ENCODE measurements at regions of chr7 and their contacts with region 1.

Region 1: GRCh38 chr7:30564243-30564892 is 30.3 kb upstream of the GARS1 start:
- DNase-seq: peak; percentile 83
- ATAC-seq: peak; percentile 97
- H3K4me3 Mint-ChIP-seq: no peak overlapping the region
- H3K27ac Mint-ChIP-seq: peak overlapping the region; percentile 71
- H3K4me1 Mint-ChIP-seq: no peaks in the 10 kb centered on the region
- H3K27me3 Mint-ChIP-seq: no peaks in the 10 kb centered on the region

Region 2: DNA sequence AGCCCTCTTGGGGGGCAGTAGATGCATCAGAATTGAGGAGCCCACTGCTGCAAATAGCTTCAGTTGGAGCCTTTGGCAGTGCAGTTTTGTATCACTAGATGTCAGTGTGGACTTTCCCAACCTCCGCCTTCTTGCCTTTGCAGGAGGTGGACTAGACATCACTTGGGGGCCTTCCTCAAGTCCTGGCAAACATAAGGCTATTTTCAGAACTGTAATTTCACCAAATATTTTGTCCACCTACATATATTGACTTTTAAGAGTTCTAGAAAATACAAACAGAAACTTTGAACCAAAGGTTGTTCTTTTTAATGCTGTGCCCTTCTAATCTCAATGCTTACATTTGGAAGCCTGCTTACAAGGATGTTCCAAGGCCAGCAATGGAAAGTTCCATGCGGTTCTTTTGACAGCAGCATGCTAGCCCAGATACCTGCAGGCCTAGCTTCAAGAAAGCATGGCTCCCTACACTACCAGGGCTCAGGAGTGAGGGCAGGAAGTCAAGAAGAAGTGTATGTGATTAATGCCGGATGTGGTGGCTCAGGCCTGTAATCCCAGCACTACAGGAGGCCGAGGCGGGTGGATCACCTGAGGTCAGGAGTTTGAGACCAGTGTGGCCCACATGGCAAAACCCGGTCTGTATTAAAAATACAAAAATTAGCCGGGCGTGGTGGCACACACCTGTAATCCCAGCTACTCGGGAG is 288.0 kb before region 1 on chr7:
- CTCF ChIA-PET with region 1: interaction called, 74 read pairs
- POLR2A ChIA-PET with region 1: no interaction called
- DNase-seq: peak; percentile 65
- ATAC-seq: peak; percentile 73
- H3K4me3 Mint-ChIP-seq: no peak overlapping the region
- H3K27ac Mint-ChIP-seq: no peak overlapping the region
- H3K4me1 Mint-ChIP-seq: peaks cover 6% of the 10 kb centered on the region
- H3K27me3 Mint-ChIP-seq: no peaks in the 10 kb centered on the region

Region 3: GRCh38 chr7:30510124-30511075 is 54.0 kb before region 1 on chr7:
- CTCF ChIA-PET with region 1: interaction called, 26 read pairs
- POLR2A ChIA-PET with region 1: no interaction called
- DNase-seq: peak; percentile 49
- ATAC-seq: peak; percentile 55
- H3K4me3 Mint-ChIP-seq: no peak overlapping the region
- H3K27ac Mint-ChIP-seq: no peak overlapping the region
- H3K4me1 Mint-ChIP-seq: peaks cover 6% of the 10 kb centered on the region
- H3K27me3 Mint-ChIP-seq: no peaks in the 10 kb centered on the region

Region 4: DNA sequence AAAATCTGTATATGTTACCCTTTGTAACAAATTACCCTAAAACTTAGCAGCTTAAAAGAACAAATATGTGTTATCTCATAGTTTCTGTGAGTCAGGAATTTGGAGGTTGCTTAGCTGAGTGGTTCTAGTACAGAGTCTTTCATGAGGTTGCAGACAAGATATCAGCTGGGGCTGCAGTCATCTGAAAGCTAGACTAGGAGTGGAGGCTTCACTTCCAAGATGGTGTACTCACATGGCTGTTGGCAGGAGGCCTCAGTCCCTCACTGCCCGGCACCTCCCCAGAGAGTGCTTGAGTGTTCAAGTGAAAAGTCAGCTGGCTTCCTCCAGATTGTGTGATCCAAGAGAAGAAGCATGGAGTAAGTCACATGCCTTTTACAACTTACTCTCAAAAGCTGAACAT is 42.8 kb before region 1 on chr7:
- CTCF ChIA-PET with region 1: interaction called, 10 read pairs
- POLR2A ChIA-PET with region 1: no interaction called
- DNase-seq: no peak
- ATAC-seq: no peak
- H3K4me3 Mint-ChIP-seq: no peak overlapping the region
- H3K27ac Mint-ChIP-seq: no peak overlapping the region
- H3K4me1 Mint-ChIP-seq: peaks cover 5% of the 10 kb centered on the region
- H3K27me3 Mint-ChIP-seq: no peaks in the 10 kb centered on the region

Region 5: GRCh38 chr7:30548762-30549344 is 15.5 kb before region 1 on chr7:
- CTCF ChIA-PET with region 1: interaction called, 39 read pairs
- POLR2A ChIA-PET with region 1: no interaction called
- DNase-seq: peak; percentile 47
- ATAC-seq: peak; percentile 42
- H3K4me3 Mint-ChIP-seq: no peak overlapping the region
- H3K27ac Mint-ChIP-seq: no peak overlapping the region
- H3K4me1 Mint-ChIP-seq: no peaks in the 10 kb centered on the region
- H3K27me3 Mint-ChIP-seq: no peaks in the 10 kb centered on the region

Region 6: GRCh38 chr7:30594549-30595435 is 30.4 kb after region 1 on chr7 and contains the start of gene GARS1:
- CTCF ChIA-PET with region 1: interaction called, 10 read pairs
- POLR2A ChIA-PET with region 1: no interaction called
- DNase-seq: peak; percentile 92
- ATAC-seq: peak; percentile 89
- H3K4me3 Mint-ChIP-seq: peak within 1 kb of the TSS; percentile 90
- H3K27ac Mint-ChIP-seq: peak within 1 kb of the TSS; percentile 99
- H3K4me1 Mint-ChIP-seq: peaks cover 51% of the 10 kb centered on the region
- H3K27me3 Mint-ChIP-seq: no peaks in the 10 kb centered on the region
- total RNA-seq, gene GARS1: 185 to 189 TPM

Measured in activated CD8-positive, alpha-beta T cell treated with anti-CD3 and anti-CD28 coated beads, Interleukin-2, amount 10 ng/mL, durations not matched to agents 7 days and 5 days (primary cell).